Right ventricle myocardium inferior (tissue), 1 donor: ENCODE measurements at regions of chr7 and their contacts with region 1.

Region 1: GRCh38 chr7:94395141-94396036 is 694 bp downstream of the COL1A2 start:
- DNase-seq: no peak
- ATAC-seq: peak; percentile 76

Region 2: GRCh38 chr7:94324380-94325117 is 70.8 kb before region 1 on chr7:
- intact Hi-C with region 1: no loop called
- DNase-seq: no peak
- ATAC-seq: no peak

Region 3: DNA sequence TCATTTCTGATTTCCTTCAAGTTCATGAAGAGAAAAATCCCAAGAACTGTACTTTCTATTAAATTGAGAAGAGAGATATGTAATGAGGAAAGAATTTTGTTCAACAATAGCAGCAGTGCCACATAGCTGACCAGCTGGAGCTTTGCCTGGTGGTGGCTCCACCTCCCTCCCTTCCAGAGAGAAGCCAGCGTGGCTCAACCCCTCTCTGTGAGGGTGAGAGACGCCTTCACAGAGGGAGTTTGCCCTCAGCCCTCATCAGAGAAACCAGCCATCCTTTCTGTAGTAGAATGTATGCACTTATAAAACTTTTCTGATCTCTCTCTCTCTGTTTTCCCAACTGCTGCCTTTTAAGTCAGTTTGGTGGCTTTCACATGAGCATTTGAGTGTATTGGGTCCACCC is 21.2 kb before region 1 on chr7:
- intact Hi-C with region 1: loop called (anchors 1 kb)
- DNase-seq: peak; percentile 83
- ATAC-seq: peak; percentile 86